ENCODE measurements at regions of chr6 and their contacts with region 1.

Region 1: DNA sequence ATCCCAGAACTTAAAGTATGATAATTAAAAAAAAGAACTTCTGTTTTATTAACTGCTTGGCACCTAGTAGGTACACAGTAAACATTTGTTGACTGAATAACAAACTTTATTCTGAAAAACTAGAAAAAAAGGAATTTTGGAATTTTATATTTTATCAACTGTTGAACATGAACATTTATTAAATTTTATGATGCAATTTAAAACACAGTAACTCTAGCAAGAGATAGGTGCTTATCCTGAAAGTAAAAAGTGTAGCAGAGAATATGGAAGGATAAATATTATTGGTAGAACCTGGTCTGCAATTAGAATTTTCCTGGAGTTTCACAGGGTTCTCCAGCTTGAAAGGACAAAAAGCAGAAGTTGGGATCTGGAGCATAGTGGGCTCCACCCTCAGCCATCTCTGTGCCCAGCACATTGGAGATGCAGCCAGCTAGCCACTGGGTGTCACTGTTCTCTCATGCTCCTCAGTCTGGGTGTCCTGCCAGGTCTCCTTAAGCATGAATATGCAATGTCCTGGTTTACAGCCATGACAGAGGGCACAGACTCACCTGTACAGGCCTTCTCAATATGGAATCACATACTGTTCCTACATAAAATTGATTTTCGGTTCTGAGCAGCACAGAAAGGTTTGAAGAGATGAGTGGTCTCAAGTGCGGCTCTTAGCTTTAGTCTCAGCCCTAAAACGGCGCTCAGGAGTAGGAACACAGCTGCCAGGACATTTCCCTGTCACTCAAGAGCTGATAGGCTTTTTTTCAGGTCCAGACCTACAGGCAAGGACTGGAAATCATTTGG is 31.7 kb upstream of the IL20RA start:
- DNase-seq: peak; percentile 81
- ATAC-seq: peak; percentile 99
- H3K4me3 ChIP-seq: no peak overlapping the region
- H3K4me3 Mint-ChIP-seq: no peak overlapping the region
- H3K27ac ChIP-seq: no peak overlapping the region
- H3K27ac Mint-ChIP-seq: no peak overlapping the region
- H3K4me1 ChIP-seq: no peaks in the 10 kb centered on the region
- H3K4me1 Mint-ChIP-seq: peaks cover 3% of the 10 kb centered on the region
- H3K27me3 ChIP-seq: no peaks in the 10 kb centered on the region
- H3K27me3 Mint-ChIP-seq: peaks cover 5% of the 10 kb centered on the region
- CTCF ChIP-seq: peak; percentile 82

Region 2: DNA sequence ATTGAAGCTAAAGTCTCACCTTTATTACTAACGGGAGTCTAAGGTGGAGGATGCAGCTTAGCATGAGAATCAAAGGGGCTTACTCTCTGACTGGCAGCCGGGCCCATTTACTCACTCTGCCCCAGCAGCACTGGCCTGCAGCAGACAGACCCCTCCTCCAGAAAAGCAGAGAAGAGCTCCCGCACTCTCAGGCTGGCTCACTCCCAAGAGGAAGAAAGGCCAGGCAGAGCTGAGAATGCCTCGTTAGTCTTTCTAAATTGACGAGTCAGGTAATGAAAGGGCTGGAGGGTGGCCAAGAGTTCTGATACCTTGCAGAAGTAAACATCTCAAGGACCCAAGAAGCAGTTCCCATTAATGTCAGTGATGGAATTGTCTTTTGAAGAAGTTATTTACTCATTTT is 12.8 kb after region 1 on chr6:
- CTCF ChIA-PET with region 1: interaction called, 55 read pairs
- POLR2A ChIA-PET with region 1: no interaction called
- intact Hi-C with region 1: loop called (anchors 2 kb)
- DNase-seq: no peak
- ATAC-seq: no peak
- H3K4me3 ChIP-seq: no peak overlapping the region
- H3K4me3 Mint-ChIP-seq: no peak overlapping the region
- H3K27ac ChIP-seq: no peak overlapping the region
- H3K27ac Mint-ChIP-seq: no peak overlapping the region
- H3K4me1 ChIP-seq: peaks cover 13 to 16% of the 10 kb centered on the region in 2 donors
- H3K4me1 Mint-ChIP-seq: peaks cover 19% of the 10 kb centered on the region
- H3K27me3 ChIP-seq: no peaks in the 10 kb centered on the region
- H3K27me3 Mint-ChIP-seq: no peaks in the 10 kb centered on the region
- CTCF ChIP-seq: no peak

Region 3: GRCh38 chr6:137202078-137202477 is 125.6 kb after region 1 on chr6:
- CTCF ChIA-PET with region 1: interaction called, 10 read pairs
- POLR2A ChIA-PET with region 1: no interaction called
- intact Hi-C with region 1: loop called (anchors 1 kb)
- DNase-seq: peak; percentile 55
- ATAC-seq: peak; percentile 74
- H3K4me3 ChIP-seq: no peak overlapping the region
- H3K4me3 Mint-ChIP-seq: no peak overlapping the region
- H3K27ac ChIP-seq: no peak overlapping the region
- H3K27ac Mint-ChIP-seq: peak overlapping the region; percentile 61
- H3K4me1 ChIP-seq: peaks cover 10 to 11% of the 10 kb centered on the region in 2 donors
- H3K4me1 Mint-ChIP-seq: peaks cover 31% of the 10 kb centered on the region
- H3K27me3 ChIP-seq: no peaks in the 10 kb centered on the region
- H3K27me3 Mint-ChIP-seq: no peaks in the 10 kb centered on the region
- CTCF ChIP-seq: peak; percentile 67

Region 4: GRCh38 chr6:137307163-137307854 is 230.8 kb after region 1 on chr6:
- CTCF ChIA-PET with region 1: interaction called, 10 read pairs
- POLR2A ChIA-PET with region 1: no interaction called
- intact Hi-C with region 1: no loop called
- DNase-seq: peak; percentile 82
- ATAC-seq: peak; percentile 86
- H3K4me3 ChIP-seq: peak overlapping the region in 1 of 5 experiments; percentile 36
- H3K4me3 Mint-ChIP-seq: peak overlapping the region; percentile 78
- H3K27ac ChIP-seq: peak overlapping the region; percentile 56 to 78
- H3K27ac Mint-ChIP-seq: peak overlapping the region; percentile 81
- H3K4me1 ChIP-seq: peaks cover 30 to 42% of the 10 kb centered on the region in 2 donors
- H3K4me1 Mint-ChIP-seq: peaks cover 48% of the 10 kb centered on the region
- H3K27me3 ChIP-seq: no peaks in the 10 kb centered on the region
- H3K27me3 Mint-ChIP-seq: no peaks in the 10 kb centered on the region
- CTCF ChIP-seq: no peak

Region 5: GRCh38 chr6:137493218-137494038 is 417.0 kb after region 1 on chr6:
- CTCF ChIA-PET with region 1: no interaction called
- POLR2A ChIA-PET with region 1: no interaction called
- intact Hi-C with region 1: loop called (anchors 5 kb)
- DNase-seq: peak; percentile 53
- ATAC-seq: no peak
- H3K4me3 ChIP-seq: no peak overlapping the region
- H3K4me3 Mint-ChIP-seq: peak overlapping the region; percentile 53
- H3K27ac ChIP-seq: no peak overlapping the region
- H3K27ac Mint-ChIP-seq: peak overlapping the region; percentile 71
- H3K4me1 ChIP-seq: peaks cover 77 to 84% of the 10 kb centered on the region in 2 donors
- H3K4me1 Mint-ChIP-seq: peaks cover 69% of the 10 kb centered on the region
- H3K27me3 ChIP-seq: peaks cover 8 to 99% (median 90%) of the 10 kb centered on the region in 4 experiments
- H3K27me3 Mint-ChIP-seq: peaks cover 82% of the 10 kb centered on the region
- CTCF ChIP-seq: no peak

Measured in B cell (primary cell).